Activated T-helper 1 cell treated with anti-CD3 and anti-CD28 coated beads, Interleukin-12 subunit alpha, Interleukin-12 subunit beta, Interleukin-2, Interleukin-4 antibody, amounts not matched to agents 30 ng/mL and 10 ng/mL and 1 ng/mL, durations not matched to agents 14 hours and 24 hours and 36 hours (primary cell): ENCODE measurements at regions of chr20 and their contacts with region 1.

Region 1: DNA sequence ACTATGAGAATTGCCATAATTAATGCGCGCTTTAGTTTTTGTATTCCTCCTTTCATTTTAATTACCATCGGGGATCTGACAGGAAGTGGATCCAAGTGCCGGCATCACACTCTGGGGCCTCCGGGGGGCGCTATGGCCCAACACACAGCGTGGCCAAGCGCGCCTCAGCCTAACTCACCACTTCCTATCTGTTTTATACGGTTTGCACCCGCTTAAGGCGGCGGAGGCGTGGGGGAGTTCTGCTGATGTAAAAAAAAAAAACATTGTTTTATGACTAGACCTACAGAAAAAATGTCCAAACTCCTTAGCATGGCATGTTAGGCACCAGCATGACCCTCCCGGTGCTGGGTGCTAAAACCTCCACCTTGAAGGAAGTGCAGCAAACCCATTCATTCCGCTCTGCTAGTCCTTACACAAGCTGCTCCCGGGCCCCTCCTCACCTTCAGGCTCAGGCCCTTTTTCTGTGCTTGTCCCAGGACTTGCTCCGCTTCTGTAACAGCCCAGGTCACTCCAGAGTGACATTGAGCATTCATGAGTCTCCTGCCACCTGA is 4.5 kb upstream of the EBF4 start:
- DNase-seq: peak; percentile 76
- H3K4me3 Mint-ChIP-seq: peak overlapping the region; percentile 16
- H3K27ac Mint-ChIP-seq: peak overlapping the region; percentile 77
- H3K4me1 Mint-ChIP-seq: peaks cover 34% of the 10 kb centered on the region
- H3K27me3 Mint-ChIP-seq: peaks cover 13% of the 10 kb centered on the region

Region 2: DNA sequence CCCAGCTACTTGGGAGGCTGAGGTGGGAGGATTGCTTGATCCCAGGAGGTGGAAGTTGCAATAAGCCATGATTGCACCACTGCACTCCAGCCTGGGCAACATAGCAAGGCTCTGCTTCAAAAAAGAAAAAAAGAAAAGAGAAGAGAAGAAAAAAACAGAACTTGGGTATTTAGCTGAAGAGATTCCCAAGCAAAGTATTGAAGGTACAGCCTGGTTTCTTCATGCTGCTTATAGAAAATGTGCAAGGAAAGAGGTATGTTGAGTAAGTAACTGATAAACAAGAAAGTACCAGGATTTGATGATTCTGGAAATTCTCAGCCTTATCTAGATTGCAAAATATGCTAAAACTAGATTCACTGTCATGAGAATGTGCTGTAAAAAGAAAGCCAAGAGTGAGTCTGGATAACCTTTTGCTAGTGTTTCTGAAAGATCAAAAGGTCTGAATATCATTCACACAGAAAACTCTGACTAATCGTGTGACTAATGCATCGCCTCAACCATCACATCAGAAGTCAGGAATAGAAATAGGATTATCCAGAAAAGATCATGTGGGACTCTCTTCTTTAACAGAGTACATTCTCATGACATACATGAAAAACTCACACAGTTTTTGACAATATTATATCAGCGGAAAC is 68.0 kb before region 1 on chr20:
- intact Hi-C with region 1: no loop called
- DNase-seq: no peak
- H3K4me3 Mint-ChIP-seq: no peak overlapping the region
- H3K27ac Mint-ChIP-seq: no peak overlapping the region
- H3K4me1 Mint-ChIP-seq: no peaks in the 10 kb centered on the region
- H3K27me3 Mint-ChIP-seq: peaks cover 16% of the 10 kb centered on the region

Region 3: DNA sequence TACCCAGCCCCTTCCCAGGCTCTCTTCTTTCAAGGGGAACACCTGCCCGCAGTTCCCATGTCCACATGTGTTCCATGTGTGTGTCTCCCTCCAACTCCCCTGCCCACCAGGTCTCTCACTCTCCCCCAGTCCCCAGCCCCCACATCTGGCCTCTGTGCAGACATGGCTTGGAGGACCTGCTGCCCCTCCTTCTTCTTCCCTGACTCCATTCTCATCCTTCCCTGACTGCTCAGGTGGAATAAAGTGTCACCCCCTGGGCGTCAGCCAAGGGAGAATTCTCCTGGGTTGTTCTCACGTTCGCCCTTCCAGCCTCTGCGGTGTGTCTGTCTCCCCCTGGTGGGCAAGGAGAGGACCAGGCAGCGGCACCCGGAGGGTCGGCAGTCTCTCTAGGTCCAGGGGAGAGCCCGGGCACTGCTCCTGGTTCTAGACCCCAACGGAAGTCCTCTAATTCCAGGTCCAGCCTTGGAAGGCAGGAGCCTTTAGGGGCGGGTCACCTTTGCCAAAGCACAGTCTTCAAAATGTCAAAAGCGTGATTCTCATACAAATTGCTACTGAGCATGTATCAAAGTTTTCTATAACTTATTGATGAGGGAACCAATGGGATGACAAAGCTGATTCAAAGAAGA is 54.9 kb after region 1 on chr20:
- intact Hi-C with region 1: loop called (anchors 1 kb)
- DNase-seq: peak; percentile 65
- H3K4me3 Mint-ChIP-seq: peak overlapping the region; percentile 45
- H3K27ac Mint-ChIP-seq: peak overlapping the region; percentile 80
- H3K4me1 Mint-ChIP-seq: peaks cover 30% of the 10 kb centered on the region
- H3K27me3 Mint-ChIP-seq: peaks cover 17% of the 10 kb centered on the region

Region 4: GRCh38 chr20:2752567-2753460 is 64.7 kb after region 1 on chr20:
- intact Hi-C with region 1: loop called (anchors 1 kb)
- DNase-seq: no peak
- H3K4me3 Mint-ChIP-seq: peak overlapping the region; percentile 79
- H3K27ac Mint-ChIP-seq: no peak overlapping the region
- H3K4me1 Mint-ChIP-seq: peaks cover 22% of the 10 kb centered on the region
- H3K27me3 Mint-ChIP-seq: peaks cover 43% of the 10 kb centered on the region

Region 5: DNA sequence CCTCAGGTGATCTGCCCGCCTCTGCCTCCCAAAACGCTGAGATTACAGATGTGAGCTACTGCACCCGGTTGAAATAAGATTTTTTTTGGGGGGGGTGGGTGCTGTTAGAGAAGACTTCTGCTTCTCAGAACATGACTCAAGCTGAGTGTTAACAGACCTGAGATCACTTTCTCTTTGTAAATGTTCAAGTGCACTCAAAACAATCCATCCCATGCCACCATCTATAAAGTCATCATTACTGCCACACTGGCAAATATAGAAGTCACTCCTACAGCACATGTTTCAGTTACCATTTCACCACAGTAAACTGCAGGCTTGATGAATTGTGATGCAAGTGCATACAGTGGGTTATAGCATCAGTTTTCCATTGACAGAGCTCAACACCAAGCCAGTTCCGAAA is 161.4 kb after region 1 on chr20:
- intact Hi-C with region 1: loop called (anchors 1 kb)
- DNase-seq: no peak
- H3K4me3 Mint-ChIP-seq: no peak overlapping the region
- H3K27ac Mint-ChIP-seq: no peak overlapping the region
- H3K4me1 Mint-ChIP-seq: peaks cover 25% of the 10 kb centered on the region
- H3K27me3 Mint-ChIP-seq: no peaks in the 10 kb centered on the region

Region 6: DNA sequence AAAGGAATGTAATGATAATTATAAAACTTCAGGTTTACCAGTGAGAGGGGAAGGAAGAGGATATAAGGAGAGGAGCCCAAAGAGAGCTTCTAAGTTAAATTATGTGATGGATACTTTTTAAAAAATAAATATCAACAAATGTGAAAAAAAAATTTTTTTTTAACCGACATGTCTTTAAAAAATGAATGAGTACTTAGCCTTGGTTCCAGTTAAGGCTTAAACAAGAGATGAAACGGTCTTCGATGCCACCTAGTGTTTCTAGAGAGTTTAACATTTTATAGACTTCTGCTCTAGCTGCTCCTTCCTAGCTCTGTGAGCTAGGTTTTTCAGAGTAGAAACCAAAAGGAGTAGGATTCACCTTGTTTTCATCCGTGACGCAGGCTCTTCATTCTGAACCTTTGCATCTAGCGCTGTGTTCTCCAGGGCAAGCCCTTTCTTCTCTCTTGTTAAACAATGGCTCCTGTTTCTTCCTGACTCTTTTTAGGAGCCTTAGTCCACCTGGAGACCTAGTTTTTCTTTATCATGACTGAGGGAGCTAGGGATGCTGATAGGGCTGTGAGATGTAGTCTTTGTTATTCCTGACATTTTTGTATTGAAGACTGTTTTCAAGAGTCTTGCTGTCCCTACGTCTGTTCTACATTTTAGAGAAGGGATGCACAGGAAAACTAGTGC is 312.9 kb after region 1 on chr20:
- intact Hi-C with region 1: loop called (anchors 1 kb)
- DNase-seq: no peak
- H3K4me3 Mint-ChIP-seq: no peak overlapping the region
- H3K27ac Mint-ChIP-seq: no peak overlapping the region
- H3K4me1 Mint-ChIP-seq: no peaks in the 10 kb centered on the region
- H3K27me3 Mint-ChIP-seq: no peaks in the 10 kb centered on the region